Activated CD4-positive, alpha-beta T cell treated with anti-CD3 and anti-CD28 coated beads, Interleukin-2, amount 10 ng/mL, durations not matched to agents 24 days and 14 days (primary cell): ENCODE measurements at regions of chr7 and their contacts with region 1.

Region 1: DNA sequence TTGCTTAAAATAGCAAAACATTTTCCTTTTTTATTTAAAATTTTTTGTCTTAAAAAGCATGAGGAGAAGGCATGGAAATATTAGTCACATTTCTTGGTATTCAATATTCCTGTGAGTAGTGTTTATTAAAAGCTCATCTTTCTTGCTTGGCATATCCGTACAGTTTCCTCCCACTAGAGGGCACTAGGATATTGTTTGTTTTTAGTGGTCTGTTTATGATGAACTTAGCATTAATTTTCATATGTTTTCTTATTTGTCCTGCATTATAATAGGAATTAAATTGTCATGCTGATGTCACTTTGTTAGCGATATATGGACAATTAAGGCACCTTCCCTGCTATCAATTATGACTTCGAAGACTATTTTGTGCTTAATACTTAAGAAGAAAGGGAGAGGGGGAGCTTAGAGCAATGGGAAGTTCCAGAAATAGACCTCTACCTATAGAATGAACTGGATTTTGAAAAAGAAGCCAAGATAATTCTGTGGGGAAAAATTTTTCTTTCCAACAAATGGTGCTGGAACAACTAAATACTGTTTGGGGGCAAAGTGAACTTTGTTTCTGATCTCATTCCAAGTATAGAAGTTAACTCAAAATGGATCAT is 91.0 kb upstream of the STRIP2 start:
- DNase-seq: peak; percentile 76
- H3K4me3 Mint-ChIP-seq: no peak overlapping the region
- H3K27ac Mint-ChIP-seq: no peak overlapping the region
- H3K4me1 Mint-ChIP-seq: peaks cover 37% of the 10 kb centered on the region
- H3K27me3 Mint-ChIP-seq: no peaks in the 10 kb centered on the region

Region 2: GRCh38 chr7:129298268-129298893 is 44.8 kb before region 1 on chr7:
- intact Hi-C with region 1: no loop called
- DNase-seq: peak; percentile 82
- H3K4me3 Mint-ChIP-seq: no peak overlapping the region
- H3K27ac Mint-ChIP-seq: no peak overlapping the region
- H3K4me1 Mint-ChIP-seq: no peaks in the 10 kb centered on the region
- H3K27me3 Mint-ChIP-seq: peaks cover 4% of the 10 kb centered on the region

Region 3: GRCh38 chr7:129367700-129368388 is 24.6 kb after region 1 on chr7:
- intact Hi-C with region 1: loop called (anchors 1 kb)
- DNase-seq: peak; percentile 93
- H3K4me3 Mint-ChIP-seq: peak overlapping the region; percentile 73
- H3K27ac Mint-ChIP-seq: peak overlapping the region; percentile 89
- H3K4me1 Mint-ChIP-seq: peaks cover 37% of the 10 kb centered on the region
- H3K27me3 Mint-ChIP-seq: no peaks in the 10 kb centered on the region

Region 4: GRCh38 chr7:129376076-129376777 is 33.0 kb after region 1 on chr7:
- intact Hi-C with region 1: loop called (anchors 2 kb)
- DNase-seq: peak; percentile 87
- H3K4me3 Mint-ChIP-seq: no peak overlapping the region
- H3K27ac Mint-ChIP-seq: peak overlapping the region; percentile 25
- H3K4me1 Mint-ChIP-seq: peaks cover 30% of the 10 kb centered on the region
- H3K27me3 Mint-ChIP-seq: no peaks in the 10 kb centered on the region

Region 5: DNA sequence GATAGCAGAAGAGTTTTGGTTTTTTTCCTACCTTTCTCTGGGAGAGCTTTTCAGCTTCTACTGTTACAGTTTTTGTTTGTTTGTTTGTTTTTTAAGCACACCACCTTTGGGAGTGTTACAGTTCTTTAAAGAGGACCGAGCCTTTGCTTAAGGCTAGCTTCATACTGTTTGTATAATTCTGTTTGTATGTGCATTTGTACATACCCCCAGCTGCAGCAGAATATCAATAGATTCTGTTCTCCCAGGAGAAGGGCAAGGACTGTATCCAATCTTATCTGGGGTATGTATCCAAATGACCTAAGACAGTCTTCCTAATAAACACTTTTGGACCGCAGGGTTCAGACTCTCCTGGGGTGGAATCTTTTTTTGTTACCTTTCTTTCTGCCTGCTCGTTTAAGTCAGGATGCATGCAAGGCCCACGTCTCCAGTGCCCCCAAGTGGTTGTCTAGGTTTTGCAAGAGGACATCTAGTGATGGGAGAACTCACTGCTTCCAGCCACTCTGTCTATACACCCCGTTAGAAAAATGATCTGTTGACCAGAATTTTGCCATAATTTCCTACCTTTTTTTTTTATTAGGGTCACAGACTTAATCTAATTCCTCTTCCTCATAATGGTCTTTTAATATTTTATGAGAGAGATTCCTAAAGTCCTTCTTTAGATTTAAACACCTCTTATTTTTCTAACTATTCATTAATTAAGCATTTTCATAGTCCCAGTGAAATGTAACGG is 292.3 kb after region 1 on chr7:
- intact Hi-C with region 1: loop called (anchors 2 kb)
- DNase-seq: peak; percentile 91
- H3K4me3 Mint-ChIP-seq: no peak overlapping the region
- H3K27ac Mint-ChIP-seq: peak overlapping the region; percentile 9
- H3K4me1 Mint-ChIP-seq: peaks cover 19% of the 10 kb centered on the region
- H3K27me3 Mint-ChIP-seq: no peaks in the 10 kb centered on the region

Region 6: DNA sequence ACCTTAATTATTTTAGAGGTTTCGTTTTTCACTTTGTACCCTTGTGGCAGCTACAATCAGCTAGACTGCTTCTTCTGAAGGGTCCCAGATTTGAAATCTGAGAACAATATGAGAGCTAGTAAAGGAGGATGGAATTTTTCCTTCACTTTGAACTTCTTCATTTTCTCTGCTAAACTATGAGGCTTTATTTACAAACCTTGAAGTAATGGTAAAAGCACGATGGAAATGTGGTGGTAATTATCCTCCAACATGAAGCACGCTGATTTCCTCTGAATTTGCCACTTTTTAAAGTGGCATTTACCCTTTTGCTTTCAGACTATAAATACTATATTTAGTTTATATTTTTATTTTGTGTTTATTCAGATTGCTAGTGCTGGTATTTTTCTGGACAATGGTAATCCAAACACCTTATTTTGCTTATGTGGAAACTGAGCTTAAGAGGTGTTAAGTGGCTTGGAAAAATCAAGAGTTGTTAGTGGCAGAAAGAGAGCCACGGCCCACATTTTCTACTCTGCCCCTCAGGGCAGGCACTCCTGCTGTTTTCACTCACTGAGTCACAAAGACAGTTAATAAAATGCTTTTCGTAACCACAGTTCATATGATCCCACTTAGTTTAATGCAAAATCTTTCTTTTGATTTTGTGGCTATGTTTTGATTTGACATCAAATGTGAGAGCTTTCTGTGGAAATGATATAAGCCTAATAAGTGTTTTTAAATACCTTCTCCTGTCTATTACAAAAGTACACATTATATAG is 867.2 kb after region 1 on chr7:
- intact Hi-C with region 1: no loop called
- DNase-seq: peak; percentile 27
- H3K4me3 Mint-ChIP-seq: no peak overlapping the region
- H3K27ac Mint-ChIP-seq: no peak overlapping the region
- H3K4me1 Mint-ChIP-seq: peaks cover 7% of the 10 kb centered on the region
- H3K27me3 Mint-ChIP-seq: peaks cover 11% of the 10 kb centered on the region